Activated CD4-positive, alpha-beta T cell treated with anti-CD3 and anti-CD28 coated beads for 36 hours (primary cell): ENCODE measurements at regions of chr11 and their contacts with region 1.

Region 1: DNA sequence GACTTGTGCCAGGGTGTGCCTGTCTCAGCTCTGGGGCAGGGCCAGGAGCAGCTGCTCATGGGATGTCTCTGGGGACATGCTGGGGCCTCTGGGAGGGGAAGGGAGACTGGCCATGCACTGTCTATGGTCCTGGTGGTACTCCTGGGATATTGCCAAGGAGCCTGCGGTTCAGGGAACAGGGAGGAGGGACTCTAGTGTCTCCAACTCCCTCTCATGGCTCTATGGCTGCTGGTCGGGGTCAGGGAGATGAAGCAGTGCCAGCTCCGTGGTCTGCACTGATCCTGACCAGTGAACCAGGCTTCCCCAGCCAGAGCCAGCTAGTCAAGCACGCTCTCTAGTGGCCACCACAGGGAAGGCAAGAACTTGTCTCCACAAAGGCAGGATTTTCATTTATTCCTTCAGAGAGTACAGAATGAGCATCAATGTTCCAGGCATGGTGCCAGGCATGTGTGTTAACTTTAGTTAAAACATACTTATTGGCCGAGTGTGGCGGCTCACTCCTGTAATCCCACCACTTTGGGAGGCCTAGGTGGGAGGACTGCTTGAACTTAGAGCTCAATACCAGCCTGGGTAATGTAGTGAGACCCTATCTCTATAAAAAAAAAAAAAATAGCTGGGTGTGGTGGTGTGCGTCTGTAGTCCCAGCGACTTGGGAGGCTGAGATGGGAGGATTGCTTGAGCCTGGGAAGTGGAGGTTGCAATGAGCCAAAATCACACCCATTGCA is 2.5 kb upstream of the BEST1 start:
- DNase-seq: peak; percentile 84
- ATAC-seq: peak; percentile 72
- H3K4me3 Mint-ChIP-seq: no peak overlapping the region
- H3K27ac Mint-ChIP-seq: no peak overlapping the region
- H3K4me1 Mint-ChIP-seq: peaks cover 5% of the 10 kb centered on the region
- H3K27me3 Mint-ChIP-seq: peaks cover 2% of the 10 kb centered on the region

Region 2: GRCh38 chr11:61747192-61747966 is 200.3 kb before region 1 on chr11:
- CTCF ChIA-PET with region 1: no interaction called
- POLR2A ChIA-PET with region 1: no interaction called
- intact Hi-C with region 1: loop called in 1 of 2 experiments (anchors 5 kb)
- DNase-seq: peak; percentile 75
- ATAC-seq: peak; percentile 63
- H3K4me3 Mint-ChIP-seq: no peak overlapping the region
- H3K27ac Mint-ChIP-seq: no peak overlapping the region
- H3K4me1 Mint-ChIP-seq: peaks cover 2% of the 10 kb centered on the region
- H3K27me3 Mint-ChIP-seq: peaks cover 17% of the 10 kb centered on the region

Region 3: DNA sequence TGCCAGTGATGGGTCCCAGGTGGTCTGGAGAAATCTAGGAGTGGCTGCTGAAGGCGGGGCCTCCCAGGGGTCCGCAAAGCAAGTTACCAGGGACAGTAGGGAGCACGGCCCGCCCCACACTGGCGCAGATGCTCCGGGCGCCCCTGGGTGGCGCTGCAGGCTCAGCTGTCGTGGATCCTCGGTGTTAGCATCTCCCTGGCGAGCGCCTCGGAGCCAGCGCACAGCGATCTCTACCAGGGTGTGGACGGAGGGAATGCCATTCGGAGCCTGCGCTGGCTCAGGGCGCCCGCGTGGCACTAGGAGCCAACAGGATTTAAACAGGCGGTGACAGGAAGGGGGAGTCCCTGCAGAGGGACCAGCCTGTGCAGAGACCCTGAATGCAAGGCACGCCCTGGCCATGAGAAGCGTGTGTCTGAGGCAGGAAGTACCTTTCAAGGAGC is 76.5 kb before region 1 on chr11:
- CTCF ChIA-PET with region 1: interaction called, 10 read pairs
- POLR2A ChIA-PET with region 1: no interaction called
- intact Hi-C with region 1: loop called (anchors 1 to 2 kb)
- DNase-seq: peak; percentile 84
- ATAC-seq: peak; percentile 98
- H3K4me3 Mint-ChIP-seq: peak overlapping the region; percentile 46
- H3K27ac Mint-ChIP-seq: no peak overlapping the region
- H3K4me1 Mint-ChIP-seq: peaks cover 2% of the 10 kb centered on the region
- H3K27me3 Mint-ChIP-seq: peaks cover 3% of the 10 kb centered on the region

Region 4: GRCh38 chr11:61899146-61899841 is 48.4 kb before region 1 on chr11:
- CTCF ChIA-PET with region 1: interaction called, 70 read pairs
- POLR2A ChIA-PET with region 1: no interaction called
- intact Hi-C with region 1: loop called (anchors 1 kb)
- DNase-seq: peak; percentile 95
- ATAC-seq: peak; percentile 94
- H3K4me3 Mint-ChIP-seq: peak overlapping the region; percentile 30
- H3K27ac Mint-ChIP-seq: peak overlapping the region; percentile 55
- H3K4me1 Mint-ChIP-seq: peaks cover 3% of the 10 kb centered on the region
- H3K27me3 Mint-ChIP-seq: no peaks in the 10 kb centered on the region

Region 5: DNA sequence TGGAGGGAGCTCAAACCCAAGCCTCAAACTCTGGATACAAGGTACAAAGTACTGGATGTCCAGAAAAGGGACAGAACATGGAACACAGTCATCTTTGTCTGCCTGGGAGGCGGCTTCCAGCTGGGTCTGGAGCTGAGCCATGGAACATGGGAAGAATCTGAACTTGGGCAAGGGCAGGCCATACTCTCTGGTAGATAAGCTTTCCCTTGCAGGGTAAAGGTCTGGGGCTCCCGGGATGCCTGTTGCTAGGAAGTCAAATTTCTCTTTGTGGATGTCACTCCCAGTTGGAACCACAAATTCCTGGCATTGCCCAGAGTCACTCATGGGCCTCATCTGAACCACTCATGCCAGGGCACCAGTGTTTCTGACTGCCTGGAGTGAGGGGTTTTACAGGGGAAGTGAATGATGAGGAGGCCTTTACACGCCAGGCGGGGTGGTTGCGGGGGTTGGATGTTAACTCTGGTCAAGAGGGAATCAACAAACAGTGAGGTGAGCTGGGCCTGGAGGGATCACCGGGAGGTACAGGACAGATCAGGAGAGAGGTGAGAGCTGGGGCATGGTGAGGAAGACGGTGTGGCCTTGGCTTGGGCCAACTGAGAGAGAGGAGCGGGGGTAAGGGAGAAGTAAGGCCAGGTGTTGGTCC is 14.0 kb after region 1 on chr11:
- CTCF ChIA-PET with region 1: interaction called, 14 read pairs
- POLR2A ChIA-PET with region 1: interaction called, 5 read pairs
- intact Hi-C with region 1: no loop called
- DNase-seq: no peak
- ATAC-seq: no peak
- H3K4me3 Mint-ChIP-seq: no peak overlapping the region
- H3K27ac Mint-ChIP-seq: no peak overlapping the region
- H3K4me1 Mint-ChIP-seq: peaks cover 26% of the 10 kb centered on the region
- H3K27me3 Mint-ChIP-seq: no peaks in the 10 kb centered on the region